Posterior vena cava (tissue), 2 donors: ENCODE measurements at regions of chr10 and their contacts with region 1.

Region 1: GRCh38 chr10:84876116-84876999 is 548.0 kb downstream of the CCSER2 start:
- DNase-seq: no peak

Region 2: GRCh38 chr10:84626397-84627087 is 249.8 kb before region 1 on chr10:
- intact Hi-C with region 1: loop called in 1 of 2 experiments (anchors 5 kb)
- DNase-seq: no peak